IMR-90 (cell line): ENCODE measurements at regions of chr3 and their contacts with region 1.

Region 1: GRCh38 chr3:5187156-5187919 is at the start of gene EDEM1:
- DNase-seq: peak; percentile 94
- ATAC-seq: peak; percentile 95
- H3K4me3 ChIP-seq: peak within 1 kb of the TSS; percentile 94
- H3K27ac ChIP-seq: peak within 1 kb of the TSS; percentile 88
- H3K4me1 ChIP-seq: peaks cover 2% of the 10 kb centered on the region
- H3K27me3 ChIP-seq: no peaks in the 10 kb centered on the region
- CTCF ChIP-seq: no peak
- POLR2A ChIP-seq: peak; percentile 86
- RAD21 ChIP-seq: no peak
- total RNA-seq, gene EDEM1: 20.8 and 23.5 TPM in 2 replicates

Region 2: GRCh38 chr3:4656059-4656458 is 531.3 kb before region 1 on chr3:
- CTCF ChIA-PET with region 1: interaction called, 5 read pairs
- POLR2A ChIA-PET with region 1: no interaction called
- dilution Hi-C with region 1: no loop called
- in situ Hi-C with region 1: no loop called
- intact Hi-C with region 1: loop called (anchors 5 kb)
- DNase-seq: peak; percentile 75
- ATAC-seq: peak; percentile 98
- H3K4me3 ChIP-seq: no peak overlapping the region
- H3K27ac ChIP-seq: no peak overlapping the region
- H3K4me1 ChIP-seq: no peaks in the 10 kb centered on the region; the same call in 1 of the 2 replicates
- H3K27me3 ChIP-seq: no peaks in the 10 kb centered on the region
- CTCF ChIP-seq: peak; percentile 97
- POLR2A ChIP-seq: 0 out of 2 replicates have a peak, but pooled peaks have one; percentile 35
- RAD21 ChIP-seq: peak; percentile 99

Region 3: DNA sequence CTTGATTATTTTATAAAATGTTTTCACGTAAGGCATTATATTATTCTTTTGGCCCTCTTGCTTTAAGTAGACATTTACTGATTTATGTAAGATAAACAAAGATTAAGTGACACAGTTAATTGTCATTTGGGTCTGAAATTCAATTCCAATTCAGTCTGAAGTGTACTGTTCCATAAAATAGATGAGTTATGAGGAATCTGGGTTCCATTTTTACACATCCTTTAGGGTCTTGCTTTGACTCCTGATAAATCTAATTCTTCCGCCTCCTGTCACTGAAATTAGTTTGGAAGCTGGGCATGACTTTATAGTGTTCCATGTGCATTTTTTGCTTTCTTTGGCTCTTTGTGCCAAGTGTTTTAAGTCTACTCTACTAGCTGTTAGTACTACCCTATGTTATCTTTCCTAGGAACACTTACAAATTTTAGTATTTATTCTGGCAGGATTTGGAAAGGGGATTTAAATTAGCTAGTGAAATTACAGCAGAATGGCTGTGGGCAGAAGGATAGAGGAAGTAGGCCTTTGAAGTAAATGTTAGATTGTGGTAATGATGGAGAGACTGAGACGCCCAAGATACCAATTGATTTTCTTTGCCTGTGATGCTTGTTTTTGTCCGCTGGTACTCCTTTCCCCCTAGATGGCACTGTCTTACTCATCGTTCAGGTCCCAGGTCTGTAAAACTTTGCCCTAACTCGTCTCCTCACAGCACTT is 51.0 kb before region 1 on chr3:
- CTCF ChIA-PET with region 1: no interaction called
- POLR2A ChIA-PET with region 1: no interaction called
- dilution Hi-C with region 1: no loop called
- in situ Hi-C with region 1: no loop called
- intact Hi-C with region 1: loop called (anchors 5 kb)
- DNase-seq: peak; percentile 28
- ATAC-seq: 0 out of 2 replicates have a peak, but pooled peaks have one; percentile 16
- H3K4me3 ChIP-seq: no peak overlapping the region
- H3K27ac ChIP-seq: no peak overlapping the region
- H3K4me1 ChIP-seq: peaks cover 8% of the 10 kb centered on the region; the same call in 1 of the 2 replicates
- H3K27me3 ChIP-seq: no peaks in the 10 kb centered on the region
- CTCF ChIP-seq: peak; percentile 37
- POLR2A ChIP-seq: no peak
- RAD21 ChIP-seq: peak; percentile 33; the same call in 1 of the 2 replicates